ENCODE measurements at regions of chr1 and their contacts with region 1.

Region 1: DNA sequence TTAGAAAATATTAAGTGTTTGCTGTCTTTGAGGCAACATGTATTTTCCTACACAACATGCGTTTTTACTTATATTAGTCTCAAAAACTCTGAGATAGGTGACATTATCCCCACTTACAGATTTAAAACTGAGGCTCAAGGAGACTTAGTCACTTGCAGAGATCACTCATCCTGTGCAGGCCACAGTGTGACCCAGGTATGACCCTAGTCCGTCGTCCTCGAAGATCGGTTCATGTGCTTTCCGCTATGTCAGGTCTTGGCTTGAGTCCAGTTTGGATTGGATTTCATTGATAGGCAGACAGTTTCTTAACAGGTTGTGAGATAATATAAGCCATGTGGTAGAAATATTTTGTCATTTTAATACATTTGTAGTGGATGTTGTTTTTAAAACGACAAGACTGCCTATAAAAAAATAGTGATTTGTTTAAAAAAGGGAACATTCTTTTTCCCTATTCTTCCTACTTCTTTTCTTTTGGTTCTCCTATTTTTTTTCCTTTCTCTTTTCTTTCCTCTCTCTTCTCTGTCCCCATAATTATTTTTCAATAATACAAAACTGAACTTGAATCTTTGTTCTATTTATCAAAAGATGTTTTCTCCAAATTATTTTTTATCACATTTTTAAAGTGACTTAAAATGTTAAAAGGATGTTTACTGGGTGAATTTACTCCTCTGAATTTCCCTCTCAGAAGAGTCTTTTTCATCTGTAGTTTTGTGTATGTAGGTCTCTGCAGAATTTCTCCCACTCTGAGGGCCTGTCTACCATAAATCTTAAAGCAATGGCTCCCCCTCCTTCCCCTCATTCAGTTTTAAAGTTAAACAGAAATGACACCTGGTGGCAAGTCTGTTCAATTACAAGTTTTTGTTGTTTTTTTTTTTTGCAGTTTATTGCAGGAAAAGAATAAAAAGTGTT is 81.8 kb downstream of the PHTF1 start:
- DNase-seq: no peak
- ATAC-seq: peak; percentile 57
- H3K4me3 ChIP-seq: no peak overlapping the region
- H3K27ac ChIP-seq: no peak overlapping the region
- H3K4me1 ChIP-seq: no peaks in the 10 kb centered on the region
- H3K27me3 ChIP-seq: no peaks in the 10 kb centered on the region
- CTCF ChIP-seq: peak; percentile 58

Region 2: GRCh38 chr1:113133038-113133437 is 544.5 kb before region 1 on chr1:
- intact Hi-C with region 1: loop called (anchors 10 kb)
- DNase-seq: no peak
- ATAC-seq: no peak
- H3K4me3 ChIP-seq: no peak overlapping the region
- H3K27ac ChIP-seq: no peak overlapping the region
- H3K4me1 ChIP-seq: no peaks in the 10 kb centered on the region
- H3K27me3 ChIP-seq: no peaks in the 10 kb centered on the region
- CTCF ChIP-seq: no peak

Region 3: GRCh38 chr1:113630068-113630975 is 47.2 kb before region 1 on chr1:
- intact Hi-C with region 1: no loop called
- DNase-seq: no peak
- ATAC-seq: no peak
- H3K4me3 ChIP-seq: no peak overlapping the region
- H3K27ac ChIP-seq: no peak overlapping the region
- H3K4me1 ChIP-seq: no peaks in the 10 kb centered on the region
- H3K27me3 ChIP-seq: no peaks in the 10 kb centered on the region
- CTCF ChIP-seq: no peak

Region 4: GRCh38 chr1:113660088-113660487 is 17.4 kb before region 1 on chr1:
- intact Hi-C with region 1: no loop called
- DNase-seq: no peak
- ATAC-seq: no peak
- H3K4me3 ChIP-seq: no peak overlapping the region
- H3K27ac ChIP-seq: no peak overlapping the region
- H3K4me1 ChIP-seq: no peaks in the 10 kb centered on the region
- H3K27me3 ChIP-seq: no peaks in the 10 kb centered on the region
- CTCF ChIP-seq: no peak